K562 (cell line): ENCODE measurements at regions of chr7 and their contacts with region 1.

Region 1: GRCh38 chr7:2470204-2471021 is 5.8 kb downstream of the GRIFIN start:
- DNase-seq: no peak
- ATAC-seq: no peak
- H3K4me3 ChIP-seq: no peak overlapping the region
- H3K27ac ChIP-seq: no peak overlapping the region
- H3K4me1 ChIP-seq: peaks cover 0 to 35% of the 10 kb centered on the region in 2 experiments; a peak in 2 of 5 replicates
- H3K27me3 ChIP-seq: peaks cover 0 to 25% of the 10 kb centered on the region in 2 experiments; a peak in 4 of 5 replicates
- CTCF ChIP-seq: no peak
- EP300 ChIP-seq: no peak
- POLR2A ChIP-seq: no peak
- RAD21 ChIP-seq: no peak

Region 2: GRCh38 chr7:2451171-2452073 is 19.0 kb before region 1 on chr7:
- CTCF ChIA-PET with region 1: interaction called, 12 read pairs
- POLR2A ChIA-PET with region 1: no interaction called
- in situ Hi-C with region 1: no loop called
- intact Hi-C with region 1: no loop called
- DNase-seq: peak; percentile 75 to 85 (median 83)
- ATAC-seq: peak; percentile 97
- H3K4me3 ChIP-seq: 0 out of 2 replicates have a peak overlapping the region, but pooled peaks have one; percentile 8
- H3K27ac ChIP-seq: peak overlapping the region; percentile 38; the same call in 1 of the 3 replicates
- H3K4me1 ChIP-seq: peaks cover 7 to 25% of the 10 kb centered on the region in 2 experiments
- H3K27me3 ChIP-seq: peaks cover 0 to 10% of the 10 kb centered on the region in 2 experiments; a peak in 2 of 5 replicates
- CTCF ChIP-seq: peak; percentile 80 to 86 (median 83)
- EP300 ChIP-seq: no peak
- POLR2A ChIP-seq: no peak
- RAD21 ChIP-seq: peak; percentile 71 to 85